Psoas muscle (tissue), 8 donors: ENCODE measurements at regions of chr10 and their contacts with region 1.

Region 1: DNA sequence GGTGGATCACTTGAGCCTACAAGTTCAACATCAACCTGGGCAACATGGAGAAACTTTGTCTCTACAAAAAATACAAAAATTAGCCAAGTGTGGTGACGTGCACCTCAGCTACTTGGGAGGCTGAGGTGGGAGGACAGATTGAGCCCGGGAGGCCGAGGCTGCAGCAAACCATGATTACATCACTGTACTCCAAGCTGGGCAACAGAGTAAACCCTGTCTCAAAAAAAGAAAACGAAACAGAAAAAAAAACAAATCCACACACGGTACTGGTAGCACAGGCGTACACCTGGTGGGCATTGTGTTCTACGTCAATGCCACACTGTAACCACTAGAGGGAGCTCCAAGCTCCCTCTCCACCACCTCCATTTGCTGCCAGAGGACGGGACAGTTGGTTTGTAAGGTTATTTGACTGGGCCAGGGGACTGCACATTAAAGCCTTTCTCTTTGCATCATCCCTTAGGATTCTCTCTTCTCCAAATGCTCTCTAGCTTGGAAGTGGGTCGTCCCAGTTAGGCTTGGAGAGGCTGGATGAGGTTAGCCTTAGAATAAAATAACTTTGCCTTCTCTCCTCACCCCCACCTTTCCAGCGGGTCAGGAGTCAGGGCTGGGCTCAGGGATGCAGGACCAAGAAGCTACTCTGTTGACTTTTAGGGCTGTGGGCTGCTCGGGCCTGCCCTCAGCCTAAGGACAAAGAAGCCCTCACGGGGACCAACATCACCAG is 130.8 kb downstream of the SORBS1 start:
- DNase-seq: no peak
- ATAC-seq: peak; percentile 88 to 91 (median 88)
- H3K4me3 ChIP-seq: no peak overlapping the region
- H3K27ac ChIP-seq: peak overlapping the region; percentile 25
- H3K4me1 ChIP-seq: peaks cover 42% of the 10 kb centered on the region
- H3K27me3 ChIP-seq: no peaks in the 10 kb centered on the region
- CTCF ChIP-seq: peak; percentile 99

Region 2: GRCh38 chr10:95601116-95601719 is 170.8 kb after region 1 on chr10:
- intact Hi-C with region 1: loop called (anchors 1 kb)
- DNase-seq: peak; percentile 75 to 85
- ATAC-seq: peak; percentile 95 to 98 (median 96)
- H3K4me3 ChIP-seq: no peak overlapping the region
- H3K27ac ChIP-seq: no peak overlapping the region
- H3K4me1 ChIP-seq: peaks cover 8% of the 10 kb centered on the region
- H3K27me3 ChIP-seq: no peaks in the 10 kb centered on the region
- CTCF ChIP-seq: peak; percentile 92